Pancreas (tissue), 10 donors: ENCODE measurements at regions of chr11 and their contacts with region 1.

Region 1: DNA sequence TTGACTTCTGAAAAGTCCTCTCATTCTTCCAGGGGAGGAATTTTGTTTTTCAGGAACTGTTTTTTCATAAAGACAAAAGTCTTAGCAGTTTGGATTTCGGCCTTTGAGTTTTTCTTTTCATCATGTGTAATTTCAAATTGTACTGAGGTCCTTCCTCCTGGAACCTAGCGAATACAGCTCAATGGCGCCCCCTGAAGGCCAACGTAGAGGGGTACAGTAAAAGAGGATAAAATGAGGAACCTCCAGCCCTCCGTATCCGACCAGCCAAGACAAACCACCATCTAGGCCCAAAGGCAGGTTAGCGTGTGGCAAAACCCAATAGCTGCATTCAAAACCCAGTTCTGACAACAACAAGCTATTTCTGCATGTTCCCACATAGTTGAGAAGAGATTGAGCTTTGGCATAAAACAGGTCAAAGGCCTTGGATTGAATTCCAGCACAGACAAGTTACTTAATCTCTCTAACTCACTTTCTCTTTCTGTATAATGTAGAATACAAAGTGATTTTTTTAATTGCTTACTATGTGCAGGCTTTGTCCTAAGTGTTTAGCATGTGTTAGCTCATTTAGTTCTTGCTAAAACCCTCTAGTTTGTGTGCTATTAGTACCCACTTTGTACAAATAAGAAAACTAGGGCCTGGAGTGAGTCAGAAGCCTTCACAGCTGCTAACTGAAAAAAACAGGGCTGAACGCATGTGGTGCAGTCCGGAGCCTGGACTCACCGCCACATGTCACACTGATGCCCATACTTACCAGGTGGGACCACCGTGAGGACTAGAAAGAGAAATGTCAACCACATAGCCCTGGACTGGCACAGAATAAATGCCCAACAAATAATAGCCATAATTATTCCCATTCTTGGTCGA is 43.2 kb upstream of the ETS1 start:
- DNase-seq: peak; percentile 74 to 97 (median 83)
- ATAC-seq: peak; percentile 93 to 99 (median 97)
- H3K4me3 ChIP-seq: no peak overlapping the region
- H3K27ac ChIP-seq: no peak overlapping the region
- H3K4me1 ChIP-seq: peaks cover 0 to 3% (median 0%) of the 10 kb centered on the region in 3 donors
- H3K27me3 ChIP-seq: no peaks in the 10 kb centered on the region
- CTCF ChIP-seq: peak; percentile 61 to 80 (median 76)

Region 2: GRCh38 chr11:128172046-128172878 is 458.3 kb before region 1 on chr11:
- intact Hi-C with region 1: loop called in 2 of 3 experiments (anchors 10 kb)
- DNase-seq: peak; percentile 41 to 80 (median 60)
- ATAC-seq: peak; percentile 82 to 97 (median 94)
- H3K4me3 ChIP-seq: no peak overlapping the region
- H3K27ac ChIP-seq: no peak overlapping the region
- H3K4me1 ChIP-seq: peaks cover 0 to 4% (median 0%) of the 10 kb centered on the region in 3 donors
- H3K27me3 ChIP-seq: peaks cover 0 to 4% (median 0%) of the 10 kb centered on the region in 4 donors
- CTCF ChIP-seq: peak; percentile 29 to 65 (median 58)

Region 3: DNA sequence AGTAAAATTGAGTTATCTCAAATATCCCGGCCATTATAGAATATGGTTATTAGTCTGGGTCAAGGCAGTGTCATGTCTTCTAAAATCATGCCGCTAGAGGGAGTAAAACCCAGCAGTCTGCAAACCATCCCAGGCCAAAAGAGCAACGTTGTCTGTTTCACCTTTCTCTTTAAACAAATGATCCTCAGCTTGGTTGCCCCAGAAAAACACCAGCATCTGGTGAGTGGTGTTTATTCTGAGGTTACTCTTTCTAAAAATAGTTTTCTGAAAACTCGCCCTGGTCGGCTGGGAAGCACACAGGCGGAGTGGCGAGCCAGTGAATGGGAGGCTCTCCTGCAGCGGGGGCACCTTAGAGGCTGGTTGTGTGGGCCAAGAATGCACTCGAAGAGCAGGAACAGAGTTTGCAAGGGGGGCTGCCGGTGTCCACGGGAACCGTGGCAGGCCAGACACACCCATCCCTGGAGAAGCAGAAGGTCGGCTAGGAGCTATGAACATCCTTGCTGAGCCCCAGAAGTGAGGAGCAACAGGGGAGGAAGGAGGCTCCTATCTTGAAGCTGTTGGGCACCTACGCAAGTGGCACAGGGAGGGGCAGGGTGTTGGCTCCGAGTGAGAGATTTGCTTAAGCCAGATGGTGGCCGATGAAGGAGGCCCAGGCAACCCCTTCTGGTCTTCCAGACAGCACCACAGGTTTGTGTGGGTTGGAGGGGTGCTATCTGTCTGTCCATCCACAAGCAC is 340.3 kb before region 1 on chr11:
- intact Hi-C with region 1: loop called in 2 of 3 experiments (anchors 2 to 5 kb)
- DNase-seq: peak in 5 of 6 donors; percentile 38 to 62 (median 49)
- ATAC-seq: peak; percentile 82 to 97 (median 94)
- H3K4me3 ChIP-seq: no peak overlapping the region
- H3K27ac ChIP-seq: peak overlapping the region in 1 of 4 donors; percentile 38
- H3K4me1 ChIP-seq: peaks cover 0 to 8% (median 0%) of the 10 kb centered on the region in 3 donors
- H3K27me3 ChIP-seq: no peaks in the 10 kb centered on the region
- CTCF ChIP-seq: peak; percentile 63 to 79 (median 70)

Region 4: GRCh38 chr11:128848815-128849455 is 218.3 kb after region 1 on chr11:
- intact Hi-C with region 1: no loop called
- DNase-seq: peak in 4 of 6 donors; percentile 49 to 85 (median 56)
- ATAC-seq: peak in 3 of 4 donors; percentile 24 to 54 (median 32)
- H3K4me3 ChIP-seq: no peak overlapping the region
- H3K27ac ChIP-seq: no peak overlapping the region
- H3K4me1 ChIP-seq: peaks cover 0 to 34% (median 8%) of the 10 kb centered on the region in 3 donors
- H3K27me3 ChIP-seq: no peaks in the 10 kb centered on the region
- CTCF ChIP-seq: peak in 3 of 4 donors; percentile 29 to 44 (median 43)